Sciatic nerve (tissue), 2 donors: ENCODE measurements at regions of chr5 and their contacts with region 1.

Region 1: DNA sequence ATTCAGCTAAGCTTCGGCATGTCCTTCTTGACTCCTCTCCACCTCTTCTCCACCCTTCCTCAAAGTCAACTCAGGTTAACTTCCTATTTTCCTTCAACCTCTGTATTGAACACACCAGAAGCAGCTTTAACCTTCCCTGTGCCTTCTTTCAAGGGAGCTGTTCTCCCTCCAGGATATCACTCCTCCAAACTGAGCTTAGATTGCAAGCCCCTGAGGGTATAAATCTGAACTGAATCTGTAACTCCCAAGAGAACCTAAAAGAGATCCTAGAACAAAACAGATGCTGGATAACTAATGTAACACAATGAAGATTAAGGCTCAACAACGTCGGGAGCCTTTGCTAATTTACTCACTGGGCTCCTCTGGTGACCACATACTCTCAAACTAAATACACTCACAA is 1.1 kb downstream of the SLCO4C1 start:
- DNase-seq: no peak
- ATAC-seq: no peak

Region 2: DNA sequence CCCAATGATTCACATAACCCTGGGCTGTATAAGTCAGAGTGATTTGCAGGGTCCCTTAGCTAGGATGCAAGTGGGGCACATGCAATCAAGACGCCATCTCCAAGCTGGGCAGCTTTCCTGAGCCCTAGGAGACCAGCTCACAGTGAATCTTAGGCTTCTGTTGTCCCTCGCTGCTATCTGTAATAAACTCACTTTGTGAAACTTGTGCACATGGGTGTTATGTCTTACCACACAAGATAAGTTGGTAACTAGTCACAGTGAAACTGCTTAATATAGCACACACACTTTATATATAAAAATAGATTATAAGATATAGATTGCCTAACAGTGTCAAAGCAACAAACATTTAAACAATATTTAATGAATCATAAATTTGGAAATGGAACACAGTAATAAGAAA is 657.4 kb before region 1 on chr5:
- intact Hi-C with region 1: no loop called
- DNase-seq: no peak
- ATAC-seq: no peak

Region 3: DNA sequence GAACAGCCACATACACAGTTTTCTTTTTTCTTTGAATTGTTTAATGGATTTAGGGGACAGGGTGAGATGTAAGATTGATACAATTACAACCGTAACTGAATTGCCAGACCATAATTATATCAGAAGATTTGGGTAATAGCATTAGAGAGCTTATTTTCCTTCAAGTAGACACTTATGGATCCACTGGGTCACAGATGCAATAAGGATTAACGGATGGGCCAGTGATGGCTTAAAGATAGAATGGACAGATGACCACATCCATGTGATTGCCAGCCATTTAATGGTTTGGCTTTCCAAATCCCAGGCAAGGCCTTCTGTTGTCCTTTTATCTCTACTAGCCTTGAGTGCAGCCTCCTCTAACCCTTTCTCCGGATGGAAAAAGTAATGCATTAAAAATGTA is 1362.3 kb after region 1 on chr5:
- intact Hi-C with region 1: loop called (anchors 5 kb)
- DNase-seq: no peak
- ATAC-seq: no peak